ENCODE measurements at regions of chr4 and their contacts with region 1.

Region 1: GRCh38 chr4:87240341-87240740 is 19.9 kb upstream of the KLHL8 start:
- DNase-seq: peak; percentile 36
- ATAC-seq: peak; percentile 59
- H3K4me3 ChIP-seq: peak overlapping the region; percentile 38; the same call in 1 of the 2 replicates
- H3K27ac ChIP-seq: peak overlapping the region; percentile 63
- H3K4me1 ChIP-seq: peaks cover 30% of the 10 kb centered on the region
- H3K27me3 ChIP-seq: no peaks in the 10 kb centered on the region
- CTCF ChIP-seq: no peak

Region 2: GRCh38 chr4:87353592-87353991 is 113.3 kb after region 1 on chr4:
- CTCF ChIA-PET with region 1: no interaction called
- POLR2A ChIA-PET with region 1: interaction called, 23 read pairs
- intact Hi-C with region 1: no loop called
- DNase-seq: peak; percentile 67
- ATAC-seq: peak; percentile 61
- H3K4me3 ChIP-seq: no peak overlapping the region
- H3K27ac ChIP-seq: no peak overlapping the region
- H3K4me1 ChIP-seq: peaks cover 20% of the 10 kb centered on the region
- H3K27me3 ChIP-seq: no peaks in the 10 kb centered on the region
- CTCF ChIP-seq: peak; percentile 76

Measured in PC-3 (cell line).